WTC11 (cell line): ENCODE measurements at regions of chr10 and their contacts with region 1.

Region 1: GRCh38 chr10:132360766-132361447 is 28.9 kb downstream of the LRRC27 start:
- DNase-seq: peak; percentile 78
- ATAC-seq: peak; percentile 92
- H3K4me3 Mint-ChIP-seq: no peak overlapping the region
- H3K27ac Mint-ChIP-seq: no peak overlapping the region
- H3K4me1 Mint-ChIP-seq: no peaks in the 10 kb centered on the region
- H3K27me3 Mint-ChIP-seq: no peaks in the 10 kb centered on the region
- CTCF ChIP-seq: peak; percentile 61; the same call in 1 of the 2 replicates

Region 2: DNA sequence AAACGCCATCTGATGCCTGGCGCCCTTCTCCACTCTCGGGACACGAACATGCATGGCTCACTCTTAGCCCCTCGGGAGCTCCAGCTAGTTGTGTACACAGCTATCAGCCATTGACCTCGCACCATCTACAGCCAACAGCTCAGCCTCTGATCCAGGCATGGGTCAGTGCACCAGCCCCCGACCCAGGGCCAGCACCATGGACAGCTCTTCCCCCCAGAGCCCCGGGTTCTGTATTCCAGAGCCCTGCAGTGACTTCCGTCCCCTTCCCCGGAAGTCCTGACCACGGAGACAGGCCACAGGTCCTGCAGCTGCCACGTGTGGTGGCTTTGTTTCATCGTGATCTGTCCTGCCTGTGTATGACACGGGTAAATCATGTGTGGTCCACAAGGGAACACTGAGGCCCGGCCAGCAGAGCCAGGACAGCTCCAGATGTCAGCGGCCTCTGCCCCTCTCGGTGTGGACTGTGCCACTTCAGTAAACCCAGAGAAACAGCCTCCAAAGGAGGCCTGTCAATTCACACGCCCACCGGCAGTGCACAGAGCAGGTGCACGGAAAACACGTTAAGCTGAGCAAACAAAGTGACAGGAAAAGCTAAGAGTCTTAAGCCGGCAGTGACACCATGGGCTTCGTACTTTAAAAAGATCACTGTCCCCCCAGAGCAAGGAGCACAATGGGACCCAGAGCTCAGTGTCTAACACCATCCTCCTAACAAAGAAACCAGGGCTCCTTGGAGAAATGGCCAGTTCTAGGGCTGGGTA is 66.2 kb before region 1 on chr10:
- CTCF ChIA-PET with region 1: interaction called, 10 read pairs
- POLR2A ChIA-PET with region 1: no interaction called
- DNase-seq: peak; percentile 67
- ATAC-seq: peak; percentile 38; the same call in 1 of the 2 replicates
- H3K4me3 Mint-ChIP-seq: no peak overlapping the region
- H3K27ac Mint-ChIP-seq: no peak overlapping the region
- H3K4me1 Mint-ChIP-seq: peaks cover 10% of the 10 kb centered on the region
- H3K27me3 Mint-ChIP-seq: no peaks in the 10 kb centered on the region
- CTCF ChIP-seq: no peak

Region 3: DNA sequence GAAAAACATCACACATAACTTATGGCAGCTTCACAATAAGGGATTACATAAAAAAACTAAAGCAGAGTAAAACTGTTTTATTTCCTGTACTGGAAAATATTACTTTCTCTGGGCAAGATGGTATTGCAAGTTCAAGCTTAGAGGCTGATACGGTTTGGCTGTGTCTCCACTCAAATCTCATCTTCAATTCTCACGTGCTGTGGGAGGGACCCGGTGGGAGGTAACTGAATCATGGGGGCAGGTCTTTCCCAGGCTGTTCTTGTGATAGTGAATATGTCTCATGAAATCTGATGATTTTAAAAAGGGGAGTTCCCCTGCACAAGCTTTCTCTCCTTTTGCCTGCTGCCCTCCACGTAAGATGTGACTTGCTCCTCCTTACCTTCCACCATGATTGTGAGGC is 34.0 kb before region 1 on chr10:
- CTCF ChIA-PET with region 1: no interaction called
- POLR2A ChIA-PET with region 1: no interaction called
- DNase-seq: no peak
- ATAC-seq: no peak
- H3K4me3 Mint-ChIP-seq: no peak overlapping the region
- H3K27ac Mint-ChIP-seq: no peak overlapping the region
- H3K4me1 Mint-ChIP-seq: peaks cover 31% of the 10 kb centered on the region
- H3K27me3 Mint-ChIP-seq: no peaks in the 10 kb centered on the region
- CTCF ChIP-seq: no peak

Region 4: GRCh38 chr10:132371641-132372081 is 10.8 kb after region 1 on chr10:
- CTCF ChIA-PET with region 1: interaction called, 23 read pairs
- POLR2A ChIA-PET with region 1: no interaction called
- DNase-seq: no peak
- ATAC-seq: peak; percentile 65
- H3K4me3 Mint-ChIP-seq: no peak overlapping the region
- H3K27ac Mint-ChIP-seq: no peak overlapping the region
- H3K4me1 Mint-ChIP-seq: peaks cover 27% of the 10 kb centered on the region
- H3K27me3 Mint-ChIP-seq: peaks cover 3% of the 10 kb centered on the region; the same call in 1 of the 2 replicates
- CTCF ChIP-seq: peak; percentile 32; the same call in 1 of the 2 replicates

Region 5: GRCh38 chr10:132446661-132447194 is 85.8 kb after region 1 on chr10:
- CTCF ChIA-PET with region 1: interaction called, 23 read pairs
- POLR2A ChIA-PET with region 1: no interaction called
- DNase-seq: no peak
- ATAC-seq: no peak
- H3K4me3 Mint-ChIP-seq: no peak overlapping the region
- H3K27ac Mint-ChIP-seq: no peak overlapping the region
- H3K4me1 Mint-ChIP-seq: peaks cover 33% of the 10 kb centered on the region
- H3K27me3 Mint-ChIP-seq: no peaks in the 10 kb centered on the region
- CTCF ChIP-seq: no peak

Region 6: GRCh38 chr10:132458593-132459300 is 97.8 kb after region 1 on chr10:
- CTCF ChIA-PET with region 1: interaction called, 16 read pairs
- POLR2A ChIA-PET with region 1: no interaction called
- DNase-seq: peak; percentile 82
- ATAC-seq: peak; percentile 88
- H3K4me3 Mint-ChIP-seq: no peak overlapping the region
- H3K27ac Mint-ChIP-seq: no peak overlapping the region
- H3K4me1 Mint-ChIP-seq: no peaks in the 10 kb centered on the region
- H3K27me3 Mint-ChIP-seq: peaks cover 2% of the 10 kb centered on the region; the same call in 1 of the 2 replicates
- CTCF ChIP-seq: peak; percentile 88

Region 7: GRCh38 chr10:132758878-132759421 is 398.0 kb after region 1 on chr10:
- CTCF ChIA-PET with region 1: no interaction called
- POLR2A ChIA-PET with region 1: no interaction called
- DNase-seq: no peak
- ATAC-seq: no peak
- H3K4me3 Mint-ChIP-seq: no peak overlapping the region
- H3K27ac Mint-ChIP-seq: no peak overlapping the region
- H3K4me1 Mint-ChIP-seq: no peaks in the 10 kb centered on the region
- H3K27me3 Mint-ChIP-seq: no peaks in the 10 kb centered on the region; the same call in 1 of the 2 replicates
- CTCF ChIP-seq: no peak